ENCODE measurements at regions of chr6 and their contacts with region 1.

Region 1: DNA sequence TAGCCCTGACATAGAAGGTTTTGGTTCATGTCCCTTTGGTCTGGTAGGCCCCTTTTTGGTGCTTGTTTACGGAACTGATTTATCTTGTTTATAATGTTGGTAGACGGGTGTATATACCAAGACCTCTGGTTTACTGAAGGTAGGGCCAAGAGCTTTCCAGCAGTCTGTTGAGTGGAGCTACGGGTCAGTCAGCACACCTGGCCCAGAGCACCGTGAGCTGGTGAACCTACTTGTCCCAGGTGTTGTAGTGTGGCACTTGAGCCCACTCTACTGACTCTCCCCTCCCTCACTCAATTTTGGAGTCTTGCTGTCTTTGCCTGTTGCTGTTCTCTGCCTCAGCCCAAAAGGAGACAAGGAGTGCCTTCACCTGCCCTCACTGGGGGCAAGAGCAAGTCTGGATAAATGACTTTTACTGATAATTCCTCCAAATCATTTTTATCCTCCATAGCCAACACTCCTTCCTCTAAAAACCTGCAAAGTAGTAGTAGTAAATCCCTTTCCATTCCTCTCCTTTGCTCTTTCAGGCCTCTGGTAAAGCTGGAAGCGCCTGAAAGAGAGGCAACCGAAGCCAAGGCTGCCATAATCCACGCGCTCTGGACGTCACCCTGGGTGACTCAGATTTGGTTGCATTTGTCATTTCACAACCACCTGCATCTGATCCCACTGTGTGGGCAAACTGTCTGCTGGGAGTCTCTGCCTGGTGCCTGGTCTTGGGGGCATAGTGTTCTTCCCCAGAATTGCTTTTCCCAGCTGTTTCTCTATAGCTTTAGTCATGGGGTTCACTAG is 22.2 kb downstream of the RREB1 start:
- DNase-seq: peak; percentile 88 to 95 (median 91)
- H3K4me3 ChIP-seq: no peak overlapping the region
- H3K4me3 Mint-ChIP-seq: peak overlapping the region in 1 of 2 donors; percentile 20
- H3K27ac ChIP-seq: peak overlapping the region; percentile 78 to 94
- H3K27ac Mint-ChIP-seq: peak overlapping the region; percentile 89 to 99 (median 96)
- H3K4me1 ChIP-seq: peaks cover 49 to 59% of the 10 kb centered on the region in 2 donors
- H3K4me1 Mint-ChIP-seq: peaks cover 61% of the 10 kb centered on the region
- H3K27me3 ChIP-seq: no peaks in the 10 kb centered on the region
- H3K27me3 Mint-ChIP-seq: peaks cover 0 to 3% (median 0%) of the 10 kb centered on the region in 3 donors
- CTCF ChIP-seq: no peak

Region 2: DNA sequence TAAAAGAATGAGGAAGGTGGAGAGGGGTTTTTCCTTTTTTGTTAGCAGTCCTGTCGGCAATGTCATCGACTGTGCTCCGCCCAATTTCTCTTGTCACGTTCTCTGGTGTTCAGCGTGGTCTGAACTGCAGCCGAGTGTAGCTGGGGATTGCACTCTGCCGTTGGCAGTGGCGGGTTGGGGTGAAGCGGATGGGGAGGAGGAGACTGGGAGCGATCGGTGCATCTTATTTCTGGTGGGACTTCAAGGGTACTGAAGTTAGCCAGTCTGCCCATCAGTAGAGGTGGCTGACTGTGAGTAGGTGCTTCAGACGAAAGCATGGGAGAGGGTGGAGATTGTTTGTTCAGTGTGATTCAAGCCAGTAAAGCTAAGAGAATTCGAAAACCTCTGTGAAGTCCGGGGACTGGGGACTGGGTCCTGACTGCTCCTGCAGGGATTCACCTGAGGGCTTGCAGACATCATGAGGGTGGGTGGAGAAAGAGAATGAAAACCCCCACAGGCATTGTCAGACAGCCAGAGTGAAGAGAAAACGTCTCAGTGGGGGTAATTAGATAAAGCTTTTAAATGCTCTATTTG is 17.1 kb before region 1 on chr6:
- intact Hi-C with region 1: no loop called
- DNase-seq: peak; percentile 80 to 88 (median 80)
- H3K4me3 ChIP-seq: peak overlapping the region in 1 of 3 experiments; percentile 41
- H3K4me3 Mint-ChIP-seq: peak overlapping the region; percentile 66 to 71
- H3K27ac ChIP-seq: peak overlapping the region; percentile 27 to 78
- H3K27ac Mint-ChIP-seq: peak overlapping the region; percentile 46 to 89 (median 86)
- H3K4me1 ChIP-seq: peaks cover 40 to 75% of the 10 kb centered on the region in 2 donors
- H3K4me1 Mint-ChIP-seq: peaks cover 75% of the 10 kb centered on the region
- H3K27me3 ChIP-seq: no peaks in the 10 kb centered on the region
- H3K27me3 Mint-ChIP-seq: no peaks in the 10 kb centered on the region
- CTCF ChIP-seq: no peak

Region 3: GRCh38 chr6:7145885-7146828 is 16.2 kb after region 1 on chr6:
- intact Hi-C with region 1: no loop called
- DNase-seq: peak; percentile 58 to 66 (median 65)
- H3K4me3 ChIP-seq: peak overlapping the region in 1 of 3 experiments; percentile 47
- H3K4me3 Mint-ChIP-seq: peak overlapping the region; percentile 66 to 67
- H3K27ac ChIP-seq: peak overlapping the region; percentile 83 to 87
- H3K27ac Mint-ChIP-seq: peak overlapping the region; percentile 84 to 97 (median 95)
- H3K4me1 ChIP-seq: peaks cover 38 to 63% of the 10 kb centered on the region in 2 donors
- H3K4me1 Mint-ChIP-seq: peaks cover 76% of the 10 kb centered on the region
- H3K27me3 ChIP-seq: no peaks in the 10 kb centered on the region
- H3K27me3 Mint-ChIP-seq: peaks cover 0 to 2% (median 0%) of the 10 kb centered on the region in 3 donors
- CTCF ChIP-seq: no peak

Region 4: GRCh38 chr6:7166410-7167305 is 36.7 kb after region 1 on chr6:
- intact Hi-C with region 1: loop called in 1 of 2 experiments (anchors 5 kb)
- DNase-seq: peak; percentile 83 to 91 (median 85)
- H3K4me3 ChIP-seq: peak overlapping the region in 1 of 3 experiments; percentile 50
- H3K4me3 Mint-ChIP-seq: peak overlapping the region; percentile 41 to 60
- H3K27ac ChIP-seq: peak overlapping the region; percentile 89 to 96
- H3K27ac Mint-ChIP-seq: peak overlapping the region; percentile 90 to 97 (median 95)
- H3K4me1 ChIP-seq: peaks cover 61 to 65% of the 10 kb centered on the region in 2 donors
- H3K4me1 Mint-ChIP-seq: peaks cover 85% of the 10 kb centered on the region
- H3K27me3 ChIP-seq: no peaks in the 10 kb centered on the region
- H3K27me3 Mint-ChIP-seq: peaks cover 0 to 4% (median 0%) of the 10 kb centered on the region in 3 donors
- CTCF ChIP-seq: no peak

Region 5: GRCh38 chr6:7373739-7374138 is 243.8 kb after region 1 on chr6:
- intact Hi-C with region 1: no loop called
- DNase-seq: no peak
- H3K4me3 ChIP-seq: no peak overlapping the region
- H3K4me3 Mint-ChIP-seq: peak overlapping the region in 1 of 2 donors; percentile 50
- H3K27ac ChIP-seq: no peak overlapping the region
- H3K27ac Mint-ChIP-seq: peak overlapping the region in 2 of 7 donors; percentile 0 to 6
- H3K4me1 ChIP-seq: peaks cover 0 to 6% of the 10 kb centered on the region in 2 donors
- H3K4me1 Mint-ChIP-seq: peaks cover 11% of the 10 kb centered on the region
- H3K27me3 ChIP-seq: no peaks in the 10 kb centered on the region
- H3K27me3 Mint-ChIP-seq: peaks cover 0 to 5% (median 0%) of the 10 kb centered on the region in 3 donors
- CTCF ChIP-seq: no peak